ENCODE measurements at regions of chr20 and their contacts with region 1.

Region 1: GRCh38 chr20:62302341-62303058 is at the start of gene ADRM1:
- DNase-seq: peak; percentile 98
- ATAC-seq: peak; percentile 86
- H3K4me3 ChIP-seq: peak within 1 kb of the TSS; percentile 35 to 88 (median 70)
- H3K4me3 Mint-ChIP-seq: peak within 1 kb of the TSS; percentile 97
- H3K27ac ChIP-seq: peak within 1 kb of the TSS; percentile 73 to 87
- H3K27ac Mint-ChIP-seq: peak within 1 kb of the TSS; percentile 96
- H3K4me1 ChIP-seq: peaks cover 15 to 29% of the 10 kb centered on the region in 2 donors
- H3K4me1 Mint-ChIP-seq: peaks cover 23% of the 10 kb centered on the region
- H3K27me3 ChIP-seq: no peaks in the 10 kb centered on the region
- H3K27me3 Mint-ChIP-seq: no peaks in the 10 kb centered on the region
- CTCF ChIP-seq: peak; percentile 76
- total RNA-seq, gene ADRM1: 64.2 and 73.9 TPM in 2 replicates

Region 2: DNA sequence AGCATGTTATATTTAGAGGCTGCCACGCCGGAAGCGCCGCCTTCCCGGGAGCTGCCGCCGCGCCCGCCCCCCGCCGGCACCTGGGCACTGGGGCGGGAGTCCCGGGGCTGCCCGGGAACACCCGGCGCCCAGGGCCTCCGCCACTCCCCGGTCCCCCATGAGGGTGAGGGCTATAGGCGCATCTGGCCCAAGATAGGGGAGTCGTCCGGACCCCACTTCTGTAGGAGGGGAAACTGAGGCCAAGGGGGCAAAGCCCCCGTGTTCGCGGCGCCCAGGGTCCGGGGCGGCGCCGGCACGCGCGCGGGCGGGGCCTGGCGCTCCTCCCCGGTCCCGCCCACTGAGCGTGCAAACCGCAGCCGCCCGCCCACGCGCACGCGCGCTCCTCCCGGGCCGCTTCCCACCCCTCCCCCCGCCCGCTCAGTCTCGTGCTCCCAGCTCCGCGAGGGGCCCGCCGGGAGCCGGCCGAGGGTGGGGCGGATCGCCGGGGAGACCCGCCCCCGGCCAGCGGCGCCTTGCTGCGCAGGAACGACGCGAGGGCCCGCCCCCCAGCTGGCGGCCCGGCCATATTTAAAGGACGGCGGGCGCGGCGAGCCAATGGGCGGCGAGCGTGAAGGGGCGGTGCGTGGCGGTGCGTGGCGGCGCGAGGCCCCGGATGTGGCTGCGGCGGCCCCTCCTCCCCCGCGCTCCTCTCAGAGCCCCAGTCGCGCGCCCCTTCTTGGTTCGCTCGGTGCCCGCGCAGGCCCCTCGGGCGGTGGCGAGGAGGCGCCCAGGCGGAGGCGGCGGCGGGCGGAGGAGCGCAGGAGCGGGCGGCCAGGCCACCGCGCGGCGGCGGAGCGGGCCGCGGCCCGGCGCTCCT is 180.5 kb before region 1 on chr20 and contains the start of gene LSM14B:
- CTCF ChIA-PET with region 1: no interaction called
- POLR2A ChIA-PET with region 1: interaction called, 3 read pairs
- intact Hi-C with region 1: loop called (anchors 1 kb)
- DNase-seq: peak; percentile 99
- ATAC-seq: peak; percentile 86
- H3K4me3 ChIP-seq: peak within 1 kb of the TSS; percentile 36 to 78 (median 62)
- H3K4me3 Mint-ChIP-seq: peak within 1 kb of the TSS; percentile 92
- H3K27ac ChIP-seq: peak within 1 kb of the TSS; percentile 65 to 91
- H3K27ac Mint-ChIP-seq: peak within 1 kb of the TSS; percentile 90
- H3K4me1 ChIP-seq: peaks cover 18 to 29% of the 10 kb centered on the region in 2 donors
- H3K4me1 Mint-ChIP-seq: peaks cover 21% of the 10 kb centered on the region
- H3K27me3 ChIP-seq: no peaks in the 10 kb centered on the region
- H3K27me3 Mint-ChIP-seq: peaks cover 2% of the 10 kb centered on the region
- CTCF ChIP-seq: no peak
- total RNA-seq, gene LSM14B: 52.8 and 55.0 TPM in 2 replicates

Region 3: DNA sequence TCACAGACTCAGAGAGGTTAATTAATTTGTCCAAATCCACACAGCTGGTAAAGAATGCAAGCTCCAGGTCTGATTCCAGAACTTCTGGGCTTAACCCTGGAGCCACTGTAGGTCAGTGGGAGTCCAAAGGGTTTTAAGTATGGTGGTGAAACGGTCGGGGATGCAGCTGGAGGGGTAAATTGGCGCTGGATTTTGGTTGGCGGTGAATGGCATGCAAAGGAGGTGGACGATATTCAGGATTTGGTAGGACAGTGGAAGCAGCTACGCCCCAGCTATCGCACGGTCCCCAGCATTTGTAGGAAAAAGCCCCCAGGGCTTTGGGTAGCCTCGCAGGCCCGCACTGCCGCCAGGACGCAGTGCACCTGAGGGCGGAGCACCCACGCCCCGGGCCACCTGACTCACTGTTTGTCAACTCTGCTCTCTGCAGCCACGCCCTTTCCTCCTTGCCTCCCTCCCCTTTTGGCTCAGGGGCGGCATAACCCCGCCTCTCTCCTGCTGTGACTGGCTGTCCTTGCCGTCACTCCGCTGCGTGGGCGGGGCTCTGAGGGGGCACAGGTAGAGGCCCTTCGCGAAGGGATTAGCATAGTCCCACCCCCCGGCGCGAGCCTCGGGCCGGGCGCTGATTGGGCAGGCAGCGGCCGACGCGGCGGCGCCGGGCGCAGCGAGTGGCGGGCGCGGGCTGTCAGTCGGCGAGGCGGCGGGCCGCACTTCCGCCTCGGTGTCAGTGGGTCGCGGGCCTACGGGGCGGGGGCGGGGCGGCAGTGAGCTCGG is 64.5 kb before region 1 on chr20 and contains the start of gene OSBPL2:
- CTCF ChIA-PET with region 1: no interaction called
- POLR2A ChIA-PET with region 1: no interaction called
- intact Hi-C with region 1: loop called (anchors 1 kb)
- DNase-seq: peak; percentile 100
- ATAC-seq: peak; percentile 98
- H3K4me3 ChIP-seq: peak within 1 kb of the TSS; percentile 46 to 74 (median 60)
- H3K4me3 Mint-ChIP-seq: peak within 1 kb of the TSS; percentile 90
- H3K27ac ChIP-seq: peak within 1 kb of the TSS; percentile 43 to 83
- H3K27ac Mint-ChIP-seq: peak within 1 kb of the TSS; percentile 96
- H3K4me1 ChIP-seq: peaks cover 17 to 22% of the 10 kb centered on the region in 2 donors
- H3K4me1 Mint-ChIP-seq: peaks cover 30% of the 10 kb centered on the region
- H3K27me3 ChIP-seq: peaks cover 0 to 17% (median 1%) of the 10 kb centered on the region in 4 experiments
- H3K27me3 Mint-ChIP-seq: peaks cover 7% of the 10 kb centered on the region
- CTCF ChIP-seq: no peak
- total RNA-seq, gene OSBPL2: 74.3 and 76.6 TPM in 2 replicates

Region 4: GRCh38 chr20:62362981-62363919 is 60.8 kb after region 1 on chr20:
- CTCF ChIA-PET with region 1: interaction called, 11 read pairs
- POLR2A ChIA-PET with region 1: no interaction called
- intact Hi-C with region 1: no loop called
- DNase-seq: no peak
- ATAC-seq: no peak
- H3K4me3 ChIP-seq: no peak overlapping the region
- H3K4me3 Mint-ChIP-seq: no peak overlapping the region
- H3K27ac ChIP-seq: no peak overlapping the region
- H3K27ac Mint-ChIP-seq: no peak overlapping the region
- H3K4me1 ChIP-seq: peaks cover 16 to 21% of the 10 kb centered on the region in 2 donors
- H3K4me1 Mint-ChIP-seq: peaks cover 16% of the 10 kb centered on the region
- H3K27me3 ChIP-seq: peaks cover 0 to 10% (median 4%) of the 10 kb centered on the region in 4 experiments
- H3K27me3 Mint-ChIP-seq: no peaks in the 10 kb centered on the region
- CTCF ChIP-seq: no peak

Region 5: DNA sequence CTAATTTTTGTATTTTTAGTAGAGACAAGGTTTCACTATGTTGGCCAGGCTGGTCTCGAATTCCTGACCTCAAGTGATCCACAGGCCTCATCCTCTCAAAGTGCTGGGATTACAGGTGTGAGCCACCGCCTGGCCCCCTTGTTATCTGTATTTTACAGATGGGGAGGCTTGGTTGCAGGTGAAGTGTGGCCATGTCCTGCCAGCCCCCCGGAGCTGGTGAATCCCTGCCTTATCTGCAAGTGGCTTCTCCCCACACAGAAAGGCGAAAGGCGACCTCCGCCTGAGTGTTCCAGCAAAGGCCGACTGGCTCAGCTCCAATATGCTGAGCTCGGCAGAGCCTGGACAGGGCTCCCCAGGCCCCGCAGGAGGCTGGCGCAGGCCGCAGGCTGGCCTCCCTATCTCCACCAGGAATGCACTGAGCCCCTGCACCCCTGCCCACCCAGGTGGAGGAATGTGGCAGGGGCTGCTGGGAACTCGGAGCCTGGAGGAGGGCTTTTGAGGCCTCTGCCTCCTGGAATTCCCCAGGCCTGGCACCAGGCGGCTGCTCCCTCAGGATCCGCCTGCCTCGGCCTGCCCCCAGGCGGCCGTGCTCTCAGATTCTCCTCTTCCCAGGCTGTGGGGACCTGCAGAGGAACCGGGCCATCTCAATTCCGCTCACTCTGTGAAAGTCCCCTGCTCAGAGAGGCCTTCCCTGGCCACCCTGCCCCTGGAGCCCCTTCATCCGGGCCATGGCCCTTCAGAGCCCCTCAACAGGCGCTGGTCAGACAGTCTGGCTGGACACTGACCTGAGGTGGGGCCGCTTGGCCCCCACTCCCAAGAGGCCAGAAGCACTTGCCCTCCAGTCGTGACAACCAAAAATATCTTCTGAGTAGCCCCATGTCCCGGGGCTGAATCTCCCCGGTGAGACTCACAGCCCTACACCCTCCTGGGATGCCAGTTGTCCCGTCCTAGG is 73.9 kb after region 1 on chr20:
- CTCF ChIA-PET with region 1: interaction called, 13 read pairs
- POLR2A ChIA-PET with region 1: no interaction called
- intact Hi-C with region 1: no loop called
- DNase-seq: no peak
- ATAC-seq: no peak
- H3K4me3 ChIP-seq: no peak overlapping the region
- H3K4me3 Mint-ChIP-seq: no peak overlapping the region
- H3K27ac ChIP-seq: no peak overlapping the region
- H3K27ac Mint-ChIP-seq: no peak overlapping the region
- H3K4me1 ChIP-seq: peaks cover 0 to 3% of the 10 kb centered on the region in 2 donors
- H3K4me1 Mint-ChIP-seq: no peaks in the 10 kb centered on the region
- H3K27me3 ChIP-seq: peaks cover 0 to 7% (median under 1%) of the 10 kb centered on the region in 4 experiments
- H3K27me3 Mint-ChIP-seq: no peaks in the 10 kb centered on the region
- CTCF ChIP-seq: no peak

Region 6: DNA sequence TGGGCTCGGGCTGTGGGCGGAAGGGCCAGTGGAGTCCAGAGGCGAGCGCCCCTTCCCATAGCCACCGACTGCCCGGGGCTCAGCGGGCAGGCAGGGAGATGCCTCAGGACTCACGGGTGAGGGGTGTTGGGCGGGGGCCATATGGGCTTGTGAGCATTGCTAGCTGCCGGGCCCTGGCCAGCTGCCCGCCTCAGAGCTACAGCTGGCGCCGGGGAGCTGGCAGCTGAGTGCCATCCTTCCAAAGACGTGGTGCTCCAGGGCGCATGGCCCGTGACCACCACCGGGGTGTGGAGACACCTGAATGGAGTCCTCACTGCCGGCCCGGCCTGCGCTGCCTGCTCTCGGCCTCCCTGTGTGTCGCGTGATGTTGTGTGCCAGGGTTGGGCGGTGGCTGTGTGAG is 135.4 kb after region 1 on chr20:
- CTCF ChIA-PET with region 1: no interaction called
- POLR2A ChIA-PET with region 1: no interaction called
- intact Hi-C with region 1: no loop called
- DNase-seq: no peak
- ATAC-seq: no peak
- H3K4me3 ChIP-seq: no peak overlapping the region
- H3K4me3 Mint-ChIP-seq: no peak overlapping the region
- H3K27ac ChIP-seq: no peak overlapping the region
- H3K27ac Mint-ChIP-seq: no peak overlapping the region
- H3K4me1 ChIP-seq: peaks cover 0 to 3% of the 10 kb centered on the region in 2 donors
- H3K4me1 Mint-ChIP-seq: peaks cover 2% of the 10 kb centered on the region
- H3K27me3 ChIP-seq: peaks cover 0 to 18% (median 0%) of the 10 kb centered on the region in 4 experiments
- H3K27me3 Mint-ChIP-seq: peaks cover 35% of the 10 kb centered on the region
- CTCF ChIP-seq: no peak

Region 7: GRCh38 chr20:62500237-62500864 is 197.9 kb after region 1 on chr20:
- CTCF ChIA-PET with region 1: interaction called, 13 read pairs
- POLR2A ChIA-PET with region 1: no interaction called
- intact Hi-C with region 1: loop called (anchors 5 kb)
- DNase-seq: peak; percentile 87
- ATAC-seq: peak; percentile 65
- H3K4me3 ChIP-seq: no peak overlapping the region
- H3K4me3 Mint-ChIP-seq: peak overlapping the region; percentile 15
- H3K27ac ChIP-seq: no peak overlapping the region
- H3K27ac Mint-ChIP-seq: peak overlapping the region; percentile 67
- H3K4me1 ChIP-seq: peaks cover 28 to 44% of the 10 kb centered on the region in 2 donors
- H3K4me1 Mint-ChIP-seq: peaks cover 36% of the 10 kb centered on the region
- H3K27me3 ChIP-seq: peaks cover 0 to 5% (median 0%) of the 10 kb centered on the region in 4 experiments
- H3K27me3 Mint-ChIP-seq: peaks cover 3% of the 10 kb centered on the region
- CTCF ChIP-seq: peak; percentile 80

Region 8: DNA sequence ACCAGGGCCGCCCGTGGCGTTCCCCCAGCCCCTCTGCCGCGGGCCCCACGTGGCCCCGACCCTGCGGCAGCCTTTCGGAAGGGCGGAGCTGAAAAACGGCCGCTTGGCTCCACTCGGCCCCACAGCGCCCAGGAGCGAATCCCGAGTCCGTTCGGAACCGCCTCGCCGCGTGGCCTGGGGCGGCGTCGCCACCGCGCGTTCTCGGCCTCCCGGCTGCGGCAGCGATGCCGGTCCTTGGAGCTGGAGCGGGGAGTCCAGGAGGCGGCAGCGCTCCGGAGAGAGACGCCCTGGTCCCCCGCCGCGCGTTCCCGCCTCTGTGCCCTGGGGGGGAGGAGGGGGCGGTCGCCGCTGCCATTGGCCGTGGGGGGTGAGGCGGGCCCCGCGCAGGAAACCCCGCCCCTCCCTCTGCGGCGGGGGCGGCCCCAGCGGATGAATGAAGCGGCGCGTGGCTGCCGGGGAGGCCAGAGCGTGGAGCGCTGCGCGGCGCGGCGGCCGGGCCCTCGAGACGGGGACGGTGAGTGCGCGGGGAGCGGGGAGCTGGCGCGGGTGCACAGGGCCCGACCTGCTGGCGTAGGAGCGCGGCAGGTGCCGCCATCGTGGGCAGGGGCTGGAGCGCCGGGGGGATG is 339.7 kb after region 1 on chr20 and contains the start of gene SLCO4A1:
- CTCF ChIA-PET with region 1: no interaction called
- POLR2A ChIA-PET with region 1: no interaction called
- intact Hi-C with region 1: loop called (anchors 10 kb)
- DNase-seq: peak; percentile 90
- ATAC-seq: peak; percentile 89
- H3K4me3 ChIP-seq: peak within 1 kb of the TSS; percentile 9 to 77 (median 65)
- H3K4me3 Mint-ChIP-seq: peak within 1 kb of the TSS; percentile 89
- H3K27ac ChIP-seq: no peak within 1 kb of the TSS
- H3K27ac Mint-ChIP-seq: peak within 1 kb of the TSS; percentile 88
- H3K4me1 ChIP-seq: peaks cover 43 to 53% of the 10 kb centered on the region in 2 donors
- H3K4me1 Mint-ChIP-seq: peaks cover 43% of the 10 kb centered on the region
- H3K27me3 ChIP-seq: peaks cover 0 to 3% (median 0%) of the 10 kb centered on the region in 4 experiments
- H3K27me3 Mint-ChIP-seq: no peaks in the 10 kb centered on the region
- CTCF ChIP-seq: no peak
- total RNA-seq, gene SLCO4A1: 79.2 and 79.5 TPM in 2 replicates

Measured in B cell (primary cell).